ENCODE measurements at regions of chr17 and their contacts with region 1.

Region 1: GRCh38 chr17:75632863-75633485 is at the start of gene SMIM5:
- DNase-seq: no peak
- ATAC-seq: peak; percentile 97
- H3K4me3 ChIP-seq: no peak within 1 kb of the TSS
- H3K27ac ChIP-seq: no peak within 1 kb of the TSS
- H3K4me1 ChIP-seq: peaks cover 8% of the 10 kb centered on the region
- H3K27me3 ChIP-seq: no peaks in the 10 kb centered on the region
- CTCF ChIP-seq: peak; percentile 87 to 95 (median 92)
- EP300 ChIP-seq: no peak
- POLR2A ChIP-seq: no peak
- RAD21 ChIP-seq: peak; percentile 69
- polyA plus RNA-seq, gene SMIM5: not detected

Region 2: DNA sequence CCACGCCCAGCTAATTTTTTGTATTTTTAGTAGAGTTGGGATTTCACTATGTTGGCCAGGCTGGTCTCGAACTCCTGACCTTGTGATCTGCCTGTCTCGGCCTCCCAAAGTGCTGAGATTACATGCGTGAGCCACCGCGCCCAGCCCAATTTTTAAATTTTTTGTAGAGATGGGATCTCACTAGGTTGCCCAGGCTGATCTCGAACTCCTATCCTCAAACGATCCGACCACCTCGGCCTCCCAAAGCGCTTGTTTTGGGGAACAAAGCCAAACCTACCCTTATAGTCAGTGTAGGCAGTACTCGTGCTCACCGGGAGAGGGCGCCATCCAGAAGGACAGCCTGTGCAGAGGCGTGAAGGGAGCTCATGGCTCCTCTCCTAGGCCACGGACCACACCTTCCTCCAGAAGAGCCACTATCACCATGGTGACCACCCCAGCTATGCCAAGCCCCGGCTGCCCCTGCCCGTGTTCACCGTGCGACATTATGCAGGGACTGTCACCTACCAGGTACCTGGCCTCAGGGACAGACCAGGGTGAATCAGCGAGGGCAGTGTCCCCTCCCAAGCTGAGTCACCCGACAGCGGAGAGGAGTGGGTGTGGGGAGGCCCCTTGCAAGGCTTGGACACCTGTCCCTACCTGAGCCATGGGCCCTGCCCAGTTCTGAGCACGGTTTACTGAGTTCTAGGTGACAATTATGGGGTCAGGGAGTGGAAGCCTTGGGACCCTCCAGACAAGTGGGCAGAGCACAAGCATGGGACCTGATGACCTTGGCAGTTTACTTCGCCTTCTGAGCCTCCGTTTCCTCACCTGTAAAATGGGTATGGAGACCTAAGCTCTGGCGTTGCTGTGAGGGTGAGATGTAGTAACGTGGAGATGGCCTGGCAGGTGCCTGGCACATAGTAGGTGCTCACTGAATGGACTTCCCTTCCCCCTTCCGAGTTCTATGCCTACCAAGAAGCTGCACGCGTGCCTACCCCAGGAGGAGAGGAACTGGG is 31.6 kb before region 1 on chr17:
- CTCF ChIA-PET with region 1: interaction called, 14 read pairs
- POLR2A ChIA-PET with region 1: no interaction called
- RAD21 ChIA-PET with region 1: interaction called, 7 read pairs
- SMC1A ChIA-PET with region 1: interaction called, 7 read pairs
- in situ Hi-C with region 1: no loop called
- intact Hi-C with region 1: no loop called
- DNase-seq: no peak
- ATAC-seq: peak; percentile 94
- H3K4me3 ChIP-seq: no peak overlapping the region
- H3K27ac ChIP-seq: no peak overlapping the region
- H3K4me1 ChIP-seq: no peaks in the 10 kb centered on the region
- H3K27me3 ChIP-seq: no peaks in the 10 kb centered on the region
- CTCF ChIP-seq: peak; percentile 74 to 91 (median 79)
- EP300 ChIP-seq: no peak
- POLR2A ChIP-seq: no peak
- RAD21 ChIP-seq: peak; percentile 45

Region 3: GRCh38 chr17:75619506-75620431 is 13.2 kb before region 1 on chr17:
- CTCF ChIA-PET with region 1: interaction called, 24 read pairs
- POLR2A ChIA-PET with region 1: no interaction called
- RAD21 ChIA-PET with region 1: interaction called, 7 read pairs
- SMC1A ChIA-PET with region 1: interaction called, 3 read pairs
- in situ Hi-C with region 1: no loop called
- intact Hi-C with region 1: no loop called
- DNase-seq: no peak
- ATAC-seq: peak; percentile 68
- H3K4me3 ChIP-seq: no peak overlapping the region
- H3K27ac ChIP-seq: no peak overlapping the region
- H3K4me1 ChIP-seq: no peaks in the 10 kb centered on the region
- H3K27me3 ChIP-seq: no peaks in the 10 kb centered on the region
- CTCF ChIP-seq: peak; percentile 33 to 71 (median 39)
- EP300 ChIP-seq: no peak
- POLR2A ChIP-seq: 0 out of 2 replicates have a peak, but pooled peaks have one; percentile 10
- RAD21 ChIP-seq: no peak

Region 4: DNA sequence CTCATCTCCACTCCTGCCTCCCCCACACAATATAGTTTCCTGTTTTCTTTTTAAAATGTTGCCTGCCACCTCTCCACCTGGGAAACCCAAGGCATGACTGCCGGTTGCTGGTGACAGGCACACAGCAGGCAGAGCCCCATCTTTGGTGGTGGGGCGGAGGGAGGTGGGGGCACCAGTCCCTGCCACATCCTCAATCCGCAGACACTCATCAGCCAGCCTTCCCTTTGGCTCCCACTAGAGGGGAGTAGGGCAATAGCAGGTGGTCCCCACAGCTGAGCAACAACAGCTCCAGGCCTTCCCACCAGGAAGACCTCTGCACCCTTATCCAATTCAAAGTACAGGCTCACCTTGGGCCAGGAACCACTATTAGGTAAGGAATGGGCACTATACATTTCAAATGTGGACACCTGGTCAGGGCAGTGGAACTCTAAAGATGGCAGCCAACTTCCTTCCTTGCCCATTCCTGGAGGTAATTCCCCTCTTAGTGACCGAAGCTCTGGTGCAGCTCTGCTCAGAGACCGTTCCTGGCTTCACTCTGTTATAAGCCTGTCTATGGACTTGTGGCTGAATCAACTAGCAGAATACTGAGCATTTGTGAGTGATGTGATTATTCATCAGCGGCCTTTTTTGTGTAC is 20.1 kb after region 1 on chr17:
- CTCF ChIA-PET with region 1: interaction called, 349 read pairs
- POLR2A ChIA-PET with region 1: interaction called, 8 read pairs
- RAD21 ChIA-PET with region 1: interaction called, 30 read pairs
- SMC1A ChIA-PET with region 1: interaction called, 32 read pairs
- in situ Hi-C with region 1: no loop called
- intact Hi-C with region 1: no loop called
- DNase-seq: no peak
- ATAC-seq: peak; percentile 93
- H3K4me3 ChIP-seq: no peak overlapping the region
- H3K27ac ChIP-seq: 0 out of 2 replicates have a peak overlapping the region, but pooled peaks have one; percentile 18
- H3K4me1 ChIP-seq: peaks cover 5% of the 10 kb centered on the region; the same call in 1 of the 2 replicates
- H3K27me3 ChIP-seq: no peaks in the 10 kb centered on the region
- CTCF ChIP-seq: peak; percentile 71 to 95 (median 87)
- EP300 ChIP-seq: no peak
- POLR2A ChIP-seq: no peak
- RAD21 ChIP-seq: peak; percentile 49

Region 5: GRCh38 chr17:75673487-75673886 is 40.5 kb after region 1 on chr17:
- CTCF ChIA-PET with region 1: interaction called, 72 read pairs
- POLR2A ChIA-PET with region 1: interaction called, 4 read pairs
- RAD21 ChIA-PET with region 1: interaction called, 6 read pairs
- SMC1A ChIA-PET with region 1: interaction called, 14 read pairs
- in situ Hi-C with region 1: no loop called
- intact Hi-C with region 1: no loop called
- DNase-seq: no peak
- ATAC-seq: no peak
- H3K4me3 ChIP-seq: no peak overlapping the region
- H3K27ac ChIP-seq: no peak overlapping the region
- H3K4me1 ChIP-seq: peaks cover 2% of the 10 kb centered on the region
- H3K27me3 ChIP-seq: no peaks in the 10 kb centered on the region
- CTCF ChIP-seq: no peak
- EP300 ChIP-seq: no peak
- POLR2A ChIP-seq: no peak
- RAD21 ChIP-seq: no peak

Region 6: GRCh38 chr17:75689441-75689873 is 56.5 kb after region 1 on chr17:
- CTCF ChIA-PET with region 1: interaction called, 18 read pairs
- POLR2A ChIA-PET with region 1: interaction called, 3 read pairs
- RAD21 ChIA-PET with region 1: interaction called, 3 read pairs
- SMC1A ChIA-PET with region 1: interaction called, 5 read pairs
- in situ Hi-C with region 1: no loop called
- intact Hi-C with region 1: no loop called
- DNase-seq: peak; percentile 60
- ATAC-seq: peak; percentile 53
- H3K4me3 ChIP-seq: 0 out of 2 replicates have a peak overlapping the region, but pooled peaks have one; percentile 3
- H3K27ac ChIP-seq: peak overlapping the region; percentile 92
- H3K4me1 ChIP-seq: peaks cover 53% of the 10 kb centered on the region
- H3K27me3 ChIP-seq: no peaks in the 10 kb centered on the region
- CTCF ChIP-seq: no peak
- EP300 ChIP-seq: no peak
- POLR2A ChIP-seq: no peak
- RAD21 ChIP-seq: no peak